ENCODE measurements at regions of chr1 and their contacts with region 1.

Region 1: GRCh38 chr1:246450611-246451251 is 56.3 kb downstream of the SMYD3 start:
- DNase-seq: no peak
- ATAC-seq: peak in 3 of 4 donors; percentile 37 to 73 (median 53)
- H3K4me3 ChIP-seq: no peak overlapping the region
- H3K27ac ChIP-seq: no peak overlapping the region
- H3K4me1 ChIP-seq: peaks cover 7% of the 10 kb centered on the region
- H3K27me3 ChIP-seq: no peaks in the 10 kb centered on the region
- CTCF ChIP-seq: peak; percentile 72

Region 2: GRCh38 chr1:246002725-246003441 is 447.8 kb before region 1 on chr1:
- intact Hi-C with region 1: loop called in 1 of 2 experiments (anchors 5 kb)
- DNase-seq: peak; percentile 81 to 87
- ATAC-seq: peak; percentile 69 to 87 (median 76)
- H3K4me3 ChIP-seq: no peak overlapping the region
- H3K27ac ChIP-seq: no peak overlapping the region
- H3K4me1 ChIP-seq: peaks cover 5% of the 10 kb centered on the region
- H3K27me3 ChIP-seq: no peaks in the 10 kb centered on the region
- CTCF ChIP-seq: peak; percentile 84

Region 3: GRCh38 chr1:246012341-246012740 is 438.4 kb before region 1 on chr1:
- intact Hi-C with region 1: loop called (anchors 2 to 5 kb)
- DNase-seq: no peak
- ATAC-seq: peak in 2 of 4 donors; percentile 43 to 74
- H3K4me3 ChIP-seq: no peak overlapping the region
- H3K27ac ChIP-seq: no peak overlapping the region
- H3K4me1 ChIP-seq: no peaks in the 10 kb centered on the region
- H3K27me3 ChIP-seq: no peaks in the 10 kb centered on the region
- CTCF ChIP-seq: peak; percentile 58

Region 4: DNA sequence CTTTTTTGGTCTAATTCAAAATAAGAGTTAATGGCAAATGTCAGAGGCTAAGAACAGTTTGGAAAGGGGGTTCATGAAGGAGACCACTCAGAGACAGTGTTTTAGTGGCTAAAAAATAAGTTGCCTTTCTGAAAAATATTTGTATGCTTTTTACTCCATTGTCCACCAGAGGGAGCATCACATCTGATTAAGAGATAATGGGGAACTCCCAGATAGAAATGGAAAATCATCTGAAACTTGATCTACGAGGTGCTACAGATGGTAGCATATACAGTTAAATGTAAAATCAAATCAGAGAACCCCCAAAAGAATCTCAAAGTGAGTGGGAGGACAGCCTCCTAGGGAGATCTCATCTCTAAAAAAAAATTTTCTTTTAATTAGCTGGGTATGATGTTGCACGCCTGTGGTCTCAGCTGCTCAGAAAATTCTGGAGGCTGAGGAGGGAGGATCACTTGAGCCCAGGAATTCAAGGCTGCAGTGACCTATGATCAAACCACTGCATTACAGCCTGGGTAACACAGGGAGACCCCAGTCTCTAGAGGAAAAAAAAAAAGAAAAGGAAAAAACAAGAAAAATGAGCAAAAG is 46.7 kb after region 1 on chr1:
- intact Hi-C with region 1: no loop called
- DNase-seq: no peak
- ATAC-seq: peak; percentile 40 to 59 (median 50)
- H3K4me3 ChIP-seq: no peak overlapping the region
- H3K27ac ChIP-seq: no peak overlapping the region
- H3K4me1 ChIP-seq: no peaks in the 10 kb centered on the region
- H3K27me3 ChIP-seq: no peaks in the 10 kb centered on the region
- CTCF ChIP-seq: peak; percentile 79

Region 5: GRCh38 chr1:246689409-246690008 is 238.8 kb after region 1 on chr1:
- intact Hi-C with region 1: no loop called
- DNase-seq: peak; percentile 58 to 78
- ATAC-seq: peak; percentile 86 to 91 (median 90)
- H3K4me3 ChIP-seq: peak overlapping the region; percentile 66
- H3K27ac ChIP-seq: peak overlapping the region; percentile 81
- H3K4me1 ChIP-seq: peaks cover 14% of the 10 kb centered on the region
- H3K27me3 ChIP-seq: no peaks in the 10 kb centered on the region
- CTCF ChIP-seq: peak; percentile 67

Measured in psoas muscle (tissue), 8 donors.